ENCODE measurements at regions of chr19 and their contacts with region 1.

Region 1: DNA sequence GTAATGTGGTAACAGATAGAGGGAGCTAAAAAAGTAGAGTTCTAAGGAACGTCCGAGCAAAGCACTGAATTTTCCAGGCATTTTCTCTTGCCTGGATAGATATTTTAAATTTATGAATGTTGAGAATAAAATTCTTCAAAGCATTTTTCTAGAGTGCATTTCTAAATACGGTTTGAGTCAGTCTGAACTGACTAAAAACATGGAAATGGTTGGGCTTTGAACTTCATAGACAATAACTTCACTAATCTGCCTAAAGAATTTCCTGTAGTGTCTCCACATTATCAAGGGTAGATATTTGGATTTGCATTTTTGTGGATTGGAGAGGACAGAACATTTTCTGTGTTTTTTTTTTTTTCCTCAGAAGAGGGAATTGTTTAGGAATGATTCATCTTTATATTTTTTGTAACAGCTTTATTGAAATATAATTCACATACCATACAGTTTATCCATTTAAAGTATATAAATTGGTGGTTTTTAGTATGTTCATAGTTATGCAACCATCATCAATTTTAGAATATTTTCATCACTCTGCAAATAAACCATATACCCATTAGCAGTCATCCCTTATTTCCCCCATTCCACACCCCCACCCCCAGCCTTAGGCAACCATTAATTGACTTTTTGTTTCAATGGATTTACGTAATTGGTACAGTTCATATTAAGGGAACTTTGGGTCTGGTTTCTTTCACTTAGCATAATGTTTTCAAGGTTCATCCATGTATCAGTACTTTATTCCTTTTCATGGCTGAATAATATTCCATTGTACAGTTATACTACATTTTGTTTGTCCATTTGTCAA is 20.7 kb downstream of the GARRE1 start:
- DNase-seq: peak; percentile 96
- ATAC-seq: peak; percentile 84
- H3K4me3 ChIP-seq: no peak overlapping the region
- H3K27ac ChIP-seq: peak overlapping the region; percentile 94
- H3K4me1 ChIP-seq: peaks cover 32% of the 10 kb centered on the region
- H3K27me3 ChIP-seq: no peaks in the 10 kb centered on the region
- CTCF ChIP-seq: peak; percentile 32
- POLR2A ChIP-seq: no peak
- RAD21 ChIP-seq: no peak; the same call in 1 of the 2 replicates

Region 2: DNA sequence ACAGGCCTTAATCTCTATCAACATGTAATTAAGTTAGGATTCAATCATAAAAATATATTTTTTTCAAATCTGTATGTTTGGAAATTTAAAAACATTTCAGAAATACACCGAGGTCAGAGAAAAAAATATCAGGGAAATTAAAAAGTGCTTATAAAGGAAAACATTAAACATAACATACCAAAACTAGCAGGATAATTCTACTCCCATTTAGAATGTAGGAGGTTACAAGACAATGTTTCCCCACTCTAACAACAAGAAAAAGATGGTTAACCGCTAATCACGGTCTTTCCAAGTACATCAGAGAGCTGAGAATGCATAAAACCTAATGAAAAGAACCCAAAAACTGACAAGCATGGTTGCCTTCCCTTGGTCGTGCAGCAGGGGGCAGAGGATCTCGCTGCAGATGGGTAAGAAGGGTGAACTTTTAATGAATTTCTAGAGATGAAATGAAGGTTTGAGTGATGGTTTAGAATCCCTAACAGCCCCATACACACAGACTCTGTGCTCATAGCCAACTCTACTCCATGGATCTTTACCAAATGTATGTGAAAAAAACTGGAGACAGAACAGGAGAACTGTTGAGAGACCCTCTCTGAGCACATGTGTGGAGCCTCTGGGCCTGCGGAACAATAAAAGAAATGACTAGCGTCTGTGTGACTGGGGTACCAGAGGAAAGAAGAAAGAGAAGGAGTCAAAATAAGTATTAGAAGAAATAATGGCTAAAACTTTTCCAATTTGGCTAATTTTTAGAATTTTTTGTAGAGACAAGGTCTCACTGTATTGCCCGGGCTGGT is 154.0 kb before region 1 on chr19:
- CTCF ChIA-PET with region 1: no interaction called
- POLR2A ChIA-PET with region 1: no interaction called
- dilution Hi-C with region 1: no loop called
- in situ Hi-C with region 1: no loop called
- intact Hi-C with region 1: no loop called
- DNase-seq: peak; percentile 52
- ATAC-seq: peak; percentile 89
- H3K4me3 ChIP-seq: no peak overlapping the region
- H3K27ac ChIP-seq: no peak overlapping the region
- H3K4me1 ChIP-seq: no peaks in the 10 kb centered on the region
- H3K27me3 ChIP-seq: peaks cover 17% of the 10 kb centered on the region
- CTCF ChIP-seq: peak; percentile 76
- POLR2A ChIP-seq: no peak
- RAD21 ChIP-seq: peak; percentile 62

Region 3: DNA sequence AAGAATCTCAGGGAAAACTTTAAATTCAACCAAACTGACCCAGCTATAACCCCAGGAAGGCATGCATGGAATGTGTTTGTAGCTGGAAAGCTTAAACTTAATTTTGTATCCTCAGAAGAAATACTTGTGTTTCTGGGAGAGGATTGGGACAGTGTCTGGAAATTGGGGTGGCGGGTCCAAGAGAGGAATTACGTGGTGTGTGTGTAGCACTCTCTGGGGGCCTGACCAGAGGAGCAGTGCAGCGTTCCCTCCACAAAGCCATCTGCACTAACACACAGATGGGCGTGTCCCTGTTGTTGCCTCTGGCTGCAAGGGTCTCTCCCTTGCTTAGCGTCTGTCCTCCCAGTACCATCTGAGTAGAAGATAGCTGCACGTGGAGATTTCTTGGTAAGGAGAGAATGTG is 14.3 kb before region 1 on chr19:
- CTCF ChIA-PET with region 1: interaction called, 4 read pairs
- POLR2A ChIA-PET with region 1: interaction called, 4 read pairs
- dilution Hi-C with region 1: no loop called
- in situ Hi-C with region 1: no loop called
- intact Hi-C with region 1: loop called (anchors 2 kb)
- DNase-seq: peak; percentile 43
- ATAC-seq: peak; percentile 74
- H3K4me3 ChIP-seq: no peak overlapping the region
- H3K27ac ChIP-seq: peak overlapping the region; percentile 83
- H3K4me1 ChIP-seq: peaks cover 24% of the 10 kb centered on the region
- H3K27me3 ChIP-seq: no peaks in the 10 kb centered on the region
- CTCF ChIP-seq: no peak
- POLR2A ChIP-seq: no peak
- RAD21 ChIP-seq: no peak